GM10248 (cell line): ENCODE measurements at regions of chr5 and their contacts with region 1.

Region 1: DNA sequence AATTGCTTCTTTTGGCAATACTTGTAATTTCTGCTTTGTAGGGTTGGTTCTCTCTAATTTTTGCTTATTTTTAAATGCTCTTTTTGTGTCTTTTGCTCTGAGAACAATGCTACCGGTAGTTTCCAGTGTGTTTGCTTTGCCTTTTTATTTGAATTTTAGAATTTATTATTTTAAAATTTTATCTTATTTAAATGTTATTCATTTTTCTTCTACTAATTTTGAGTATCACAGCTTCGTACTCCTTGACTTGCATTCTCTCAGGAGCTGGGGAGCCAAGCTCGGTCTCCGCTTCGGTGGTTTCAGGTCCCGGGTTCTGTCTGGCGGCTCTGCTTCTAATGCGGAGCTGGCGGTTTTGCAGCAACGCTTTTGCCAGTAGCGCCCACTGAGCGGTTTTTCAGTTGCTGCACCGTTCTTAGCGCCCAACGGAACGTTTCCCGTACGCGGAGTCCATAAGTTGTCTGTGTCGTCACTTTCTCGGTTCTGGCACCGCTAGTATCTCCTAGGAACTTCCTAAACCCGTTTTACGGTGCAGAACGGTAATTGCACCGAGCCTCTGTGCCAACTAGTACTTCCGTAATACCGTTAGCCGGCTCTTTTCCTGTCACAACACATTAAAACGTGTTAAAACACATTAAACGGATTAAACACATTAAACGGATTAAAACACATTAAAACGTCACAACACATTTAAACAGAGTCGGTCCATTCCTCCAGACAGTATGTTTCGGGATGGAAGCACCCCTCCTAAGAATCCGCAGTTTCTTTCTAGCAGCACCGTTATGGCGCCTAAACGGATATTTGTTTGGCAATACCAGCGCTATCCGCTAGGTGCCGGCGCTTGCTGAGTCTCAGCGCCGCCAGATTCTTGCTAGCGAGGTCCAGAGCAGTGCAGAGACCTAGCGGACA is 45.6 kb downstream of the ANXA2R start:
- DNase-seq: peak; percentile 63
- CTCF ChIP-seq: peak; percentile 86

Region 2: GRCh38 chr5:42950440-42951292 is 43.8 kb before region 1 on chr5:
- CTCF ChIA-PET with region 1: interaction called, 14 read pairs
- POLR2A ChIA-PET with region 1: interaction called, 3 read pairs
- DNase-seq: peak; percentile 62
- CTCF ChIP-seq: no peak

Region 3: GRCh38 chr5:43008369-43009153 is 14.1 kb after region 1 on chr5:
- CTCF ChIA-PET with region 1: interaction called, 99 read pairs
- POLR2A ChIA-PET with region 1: interaction called, 6 read pairs
- DNase-seq: peak; percentile 73
- CTCF ChIP-seq: peak; percentile 32

Region 4: DNA sequence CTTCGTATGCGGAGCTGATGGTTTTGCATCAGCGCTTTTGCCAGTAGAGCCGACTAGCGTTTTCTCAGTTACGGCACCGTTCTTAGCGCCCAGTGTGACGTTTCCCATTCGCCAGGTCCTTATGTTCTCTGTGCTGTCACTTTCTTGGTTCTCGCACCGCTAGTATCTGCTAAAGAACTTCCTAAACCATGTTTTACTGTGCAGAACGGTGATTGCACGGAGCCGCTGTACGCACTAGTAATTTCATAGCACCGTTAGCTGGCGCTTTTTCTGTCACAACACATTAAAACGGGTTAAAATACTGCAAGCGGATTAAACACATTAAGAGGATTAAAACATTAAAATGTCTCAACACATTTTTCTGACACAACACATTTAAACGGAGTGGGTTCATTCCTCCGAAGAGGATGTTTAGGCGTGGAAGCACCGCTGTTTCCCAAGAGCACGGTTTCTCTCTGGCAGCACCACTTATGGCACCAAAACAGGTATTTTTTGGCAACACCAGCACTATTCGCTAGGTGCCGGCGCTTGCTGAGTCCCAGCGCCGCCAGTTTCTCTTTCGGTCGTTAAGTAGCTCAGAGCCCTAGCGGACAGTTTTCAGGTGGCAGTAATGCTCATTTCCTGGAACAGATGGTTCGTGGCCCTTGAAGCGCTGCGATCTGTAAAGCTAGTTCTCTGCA is 25.3 kb after region 1 on chr5:
- CTCF ChIA-PET with region 1: interaction called, 57 read pairs
- POLR2A ChIA-PET with region 1: interaction called, 4 read pairs
- DNase-seq: peak; percentile 67
- CTCF ChIP-seq: peak; percentile 33

Region 5: DNA sequence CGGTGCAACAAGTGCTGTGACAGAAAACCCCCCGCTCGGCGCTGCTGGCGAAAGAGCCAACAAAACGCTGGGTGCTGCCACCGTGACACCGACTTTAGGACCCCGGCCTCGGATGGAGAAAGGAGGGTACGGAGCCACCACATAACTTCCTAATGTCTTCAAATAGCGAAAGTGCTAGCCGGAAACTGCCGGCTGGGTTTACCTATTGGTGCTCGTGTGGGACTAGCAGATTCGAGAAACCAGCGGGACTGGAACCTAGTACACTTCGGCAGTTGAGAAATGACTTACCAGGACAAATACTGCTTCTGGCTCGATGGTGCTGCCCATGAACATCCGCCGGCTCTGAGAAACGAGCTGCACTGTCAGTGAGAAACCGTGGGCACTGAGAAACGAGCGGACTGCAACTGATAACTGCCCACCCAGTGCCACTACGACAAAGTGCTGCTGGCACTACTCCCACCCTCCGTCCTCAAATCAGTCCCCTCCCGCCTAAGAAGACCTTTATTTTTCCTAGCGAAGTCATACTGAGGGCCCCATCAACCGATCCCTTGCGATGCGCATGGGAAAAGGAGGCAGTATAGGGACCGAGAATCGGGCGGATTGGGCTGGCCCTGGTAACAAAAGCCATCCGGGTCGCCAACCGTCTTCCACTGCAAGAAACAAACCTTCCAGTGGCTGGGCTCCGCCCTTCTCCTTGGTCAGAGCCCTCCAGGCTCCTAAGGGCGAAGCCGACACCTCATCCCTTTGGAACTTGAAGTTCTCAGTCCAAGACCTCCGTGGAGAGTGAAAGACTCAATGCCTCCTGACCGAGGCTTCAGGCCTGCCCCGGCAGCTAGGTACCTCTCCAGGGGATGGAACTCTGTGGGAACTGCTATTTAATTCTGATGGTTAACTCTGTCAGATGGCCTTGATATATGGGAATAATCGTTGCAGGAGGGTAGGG is 72.6 kb after region 1 on chr5:
- CTCF ChIA-PET with region 1: interaction called, 21 read pairs
- POLR2A ChIA-PET with region 1: interaction called, 4 read pairs
- DNase-seq: peak; percentile 74
- CTCF ChIP-seq: no peak